ENCODE measurements at regions of chr3 and their contacts with region 1.

Region 1: GRCh38 chr3:171162986-171163723 is 136.6 kb upstream of the SLC2A2 start:
- DNase-seq: peak; percentile 44
- H3K4me3 Mint-ChIP-seq: no peak overlapping the region
- H3K27ac Mint-ChIP-seq: no peak overlapping the region
- H3K4me1 Mint-ChIP-seq: peaks cover 25% of the 10 kb centered on the region
- H3K27me3 Mint-ChIP-seq: no peaks in the 10 kb centered on the region

Region 2: GRCh38 chr3:170848292-170848917 is 314.8 kb before region 1 on chr3:
- CTCF ChIA-PET with region 1: no interaction called
- intact Hi-C with region 1: no loop called
- DNase-seq: no peak
- H3K4me3 Mint-ChIP-seq: no peak overlapping the region
- H3K27ac Mint-ChIP-seq: no peak overlapping the region
- H3K4me1 Mint-ChIP-seq: peaks cover 5% of the 10 kb centered on the region
- H3K27me3 Mint-ChIP-seq: peaks cover 10% of the 10 kb centered on the region

Region 3: DNA sequence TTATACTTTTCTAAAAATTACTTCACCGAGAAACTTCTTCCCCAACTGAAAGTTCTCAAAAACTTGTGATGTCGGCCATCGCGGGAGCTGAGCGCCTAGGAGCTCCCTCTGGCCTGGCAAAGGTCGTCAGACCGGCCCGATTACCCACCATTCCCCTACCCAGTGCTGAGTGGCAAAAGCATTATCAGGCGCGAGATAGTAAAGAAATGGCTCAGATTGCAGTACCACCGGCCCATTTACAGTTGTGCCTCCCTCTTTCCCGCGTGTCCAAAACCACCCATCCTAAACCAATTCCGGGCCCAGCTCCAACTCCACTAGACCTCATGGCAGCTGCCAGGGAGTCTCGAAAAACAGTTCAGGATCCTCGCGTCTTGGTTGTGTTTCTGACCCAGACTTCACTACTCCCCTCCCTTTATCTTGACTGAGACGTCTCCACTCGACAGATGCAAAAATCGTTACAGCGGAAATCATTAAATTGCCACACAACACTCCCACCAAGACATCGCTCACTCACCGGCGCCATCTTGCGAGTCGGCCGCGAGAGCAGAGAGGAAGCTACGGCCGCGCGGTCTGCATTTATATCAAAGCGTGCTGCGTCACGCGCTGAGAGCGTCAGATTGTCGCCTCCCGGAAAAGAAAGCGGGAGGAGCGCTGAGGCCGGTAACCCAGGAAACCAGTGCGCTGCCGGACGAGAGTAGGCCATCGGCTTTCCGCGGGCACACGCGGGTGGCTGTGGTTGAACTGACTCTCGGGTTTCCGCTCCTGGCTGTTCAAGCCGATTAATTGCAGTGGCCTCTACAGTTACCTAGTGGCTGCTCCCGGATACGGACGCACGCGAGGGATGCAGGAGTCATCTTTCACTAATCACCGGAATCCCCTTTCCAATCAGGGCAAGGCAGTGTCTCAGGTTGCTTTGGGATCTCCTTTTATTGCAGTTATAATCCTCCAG is 293.2 kb before region 1 on chr3 and contains the start of gene RPL22L1:
- CTCF ChIA-PET with region 1: no interaction called
- intact Hi-C with region 1: no loop called
- DNase-seq: peak; percentile 95
- H3K4me3 Mint-ChIP-seq: peak within 1 kb of the TSS; percentile 94
- H3K27ac Mint-ChIP-seq: peak within 1 kb of the TSS; percentile 98
- H3K4me1 Mint-ChIP-seq: peaks cover 14% of the 10 kb centered on the region
- H3K27me3 Mint-ChIP-seq: no peaks in the 10 kb centered on the region
- total RNA-seq, gene RPL22L1: 480 to 525 TPM

Region 4: GRCh38 chr3:170961616-170962400 is 201.3 kb before region 1 on chr3:
- CTCF ChIA-PET with region 1: no interaction called
- intact Hi-C with region 1: loop called (anchors 1 kb)
- DNase-seq: peak; percentile 21
- H3K4me3 Mint-ChIP-seq: no peak overlapping the region
- H3K27ac Mint-ChIP-seq: no peak overlapping the region
- H3K4me1 Mint-ChIP-seq: no peaks in the 10 kb centered on the region
- H3K27me3 Mint-ChIP-seq: peaks cover 3% of the 10 kb centered on the region

Region 5: GRCh38 chr3:171088964-171089754 is 74.0 kb before region 1 on chr3:
- CTCF ChIA-PET with region 1: no interaction called
- intact Hi-C with region 1: no loop called
- DNase-seq: peak; percentile 8
- H3K4me3 Mint-ChIP-seq: no peak overlapping the region
- H3K27ac Mint-ChIP-seq: no peak overlapping the region
- H3K4me1 Mint-ChIP-seq: peaks cover 5% of the 10 kb centered on the region
- H3K27me3 Mint-ChIP-seq: no peaks in the 10 kb centered on the region

Region 6: DNA sequence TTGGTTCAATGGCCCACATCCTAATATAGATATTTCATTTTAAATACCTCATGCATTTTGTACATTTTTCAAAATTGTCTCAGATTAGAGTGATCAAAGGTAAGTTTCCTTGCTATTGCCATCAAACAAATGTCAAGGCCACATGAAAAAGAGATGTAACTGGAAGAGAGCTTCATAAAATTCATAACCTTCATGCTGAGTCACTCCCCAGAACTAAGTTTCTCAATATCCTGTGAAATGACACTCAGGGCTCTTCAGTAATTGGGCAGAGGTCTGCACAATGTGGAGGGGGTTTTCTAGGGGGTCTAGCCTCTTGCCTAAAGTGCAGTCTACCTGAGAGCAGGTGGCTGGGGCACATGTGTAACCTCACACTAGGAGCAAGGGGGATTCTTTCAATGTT is 15.6 kb after region 1 on chr3:
- CTCF ChIA-PET with region 1: interaction called, 5 read pairs
- intact Hi-C with region 1: loop called (anchors 1 kb)
- DNase-seq: peak; percentile 25
- H3K4me3 Mint-ChIP-seq: no peak overlapping the region
- H3K27ac Mint-ChIP-seq: peak overlapping the region; percentile 74
- H3K4me1 Mint-ChIP-seq: peaks cover 40% of the 10 kb centered on the region
- H3K27me3 Mint-ChIP-seq: no peaks in the 10 kb centered on the region

Region 7: DNA sequence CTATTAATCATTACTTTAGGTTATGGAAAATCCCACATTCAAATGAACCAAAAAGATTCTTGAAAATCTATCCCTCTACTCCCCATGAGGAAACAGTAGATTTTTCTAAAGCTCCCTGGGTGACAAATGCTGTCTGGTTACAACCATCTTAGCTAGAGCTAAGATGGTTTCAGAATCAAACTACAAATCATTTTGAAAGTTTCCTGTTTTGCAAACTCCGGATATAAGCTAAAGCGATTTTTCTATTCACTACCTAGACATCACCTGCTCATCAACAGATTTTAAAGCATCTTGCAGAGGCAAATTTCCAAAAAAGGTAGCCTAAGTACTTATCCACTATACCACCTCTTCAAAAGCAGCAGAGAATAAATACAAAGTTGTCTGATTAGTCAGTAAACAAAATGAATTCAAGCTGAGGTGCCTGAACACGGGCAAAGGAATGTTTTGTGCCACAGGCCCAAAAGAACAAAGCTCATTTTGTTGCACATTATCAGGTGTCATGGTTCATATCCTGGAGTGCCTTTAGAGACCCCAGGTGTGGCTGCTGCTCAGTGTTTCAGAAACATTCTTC is 92.2 kb after region 1 on chr3:
- CTCF ChIA-PET with region 1: interaction called, 3 read pairs
- intact Hi-C with region 1: loop called (anchors 1 kb)
- DNase-seq: no peak
- H3K4me3 Mint-ChIP-seq: no peak overlapping the region
- H3K27ac Mint-ChIP-seq: peak overlapping the region; percentile 78
- H3K4me1 Mint-ChIP-seq: peaks cover 86% of the 10 kb centered on the region
- H3K27me3 Mint-ChIP-seq: no peaks in the 10 kb centered on the region

Region 8: DNA sequence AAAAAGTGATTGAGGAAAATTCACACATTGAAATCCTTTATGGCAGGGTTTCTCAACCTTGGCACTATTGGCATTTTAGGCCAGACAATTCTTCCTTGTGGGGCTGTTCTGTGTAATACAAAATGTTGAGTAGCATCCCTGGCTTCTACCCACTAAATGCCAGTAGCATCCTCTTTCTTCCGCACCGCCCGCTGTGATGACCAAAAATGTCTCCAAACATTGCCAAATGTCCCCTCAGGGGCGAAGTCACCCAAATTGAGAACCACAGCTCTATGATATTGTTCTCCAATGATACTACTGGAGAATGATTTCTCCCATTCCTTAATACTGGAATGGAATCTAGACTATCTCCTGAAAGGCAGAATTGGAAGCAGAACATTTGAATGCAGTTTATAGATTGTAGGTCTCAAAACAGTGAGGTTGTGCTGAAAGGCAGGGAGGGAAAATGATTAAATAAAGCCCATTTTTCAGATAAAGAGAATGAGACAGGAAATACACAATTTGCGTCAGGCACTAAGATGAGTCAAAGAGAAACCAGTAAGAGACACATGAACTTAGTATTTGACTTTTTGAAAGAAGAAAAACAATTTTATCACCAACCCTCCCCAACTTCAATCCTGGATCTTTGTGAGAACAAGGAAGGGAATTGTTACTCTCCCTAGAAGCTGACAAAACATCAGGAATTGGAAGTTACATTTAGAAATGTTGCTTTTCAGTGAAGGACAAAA is 398.6 kb after region 1 on chr3:
- CTCF ChIA-PET with region 1: interaction called, 25 read pairs
- intact Hi-C with region 1: loop called (anchors 1 kb)
- DNase-seq: no peak
- H3K4me3 Mint-ChIP-seq: peak overlapping the region; percentile 40
- H3K27ac Mint-ChIP-seq: peak overlapping the region; percentile 88
- H3K4me1 Mint-ChIP-seq: peaks cover 22% of the 10 kb centered on the region
- H3K27me3 Mint-ChIP-seq: no peaks in the 10 kb centered on the region

Region 9: GRCh38 chr3:171829841-171830517 is 666.8 kb after region 1 on chr3:
- CTCF ChIA-PET with region 1: no interaction called
- intact Hi-C with region 1: loop called (anchors 5 kb)
- DNase-seq: no peak
- H3K4me3 Mint-ChIP-seq: no peak overlapping the region
- H3K27ac Mint-ChIP-seq: no peak overlapping the region
- H3K4me1 Mint-ChIP-seq: no peaks in the 10 kb centered on the region
- H3K27me3 Mint-ChIP-seq: peaks cover 12% of the 10 kb centered on the region